Activated CD4-positive, alpha-beta T cell treated with anti-CD3 and anti-CD28 coated beads, Interleukin-2, amount 10 ng/mL, durations not matched to agents 24 days and 14 days (primary cell): ENCODE measurements at regions of chr4 and their contacts with region 1.

Region 1: DNA sequence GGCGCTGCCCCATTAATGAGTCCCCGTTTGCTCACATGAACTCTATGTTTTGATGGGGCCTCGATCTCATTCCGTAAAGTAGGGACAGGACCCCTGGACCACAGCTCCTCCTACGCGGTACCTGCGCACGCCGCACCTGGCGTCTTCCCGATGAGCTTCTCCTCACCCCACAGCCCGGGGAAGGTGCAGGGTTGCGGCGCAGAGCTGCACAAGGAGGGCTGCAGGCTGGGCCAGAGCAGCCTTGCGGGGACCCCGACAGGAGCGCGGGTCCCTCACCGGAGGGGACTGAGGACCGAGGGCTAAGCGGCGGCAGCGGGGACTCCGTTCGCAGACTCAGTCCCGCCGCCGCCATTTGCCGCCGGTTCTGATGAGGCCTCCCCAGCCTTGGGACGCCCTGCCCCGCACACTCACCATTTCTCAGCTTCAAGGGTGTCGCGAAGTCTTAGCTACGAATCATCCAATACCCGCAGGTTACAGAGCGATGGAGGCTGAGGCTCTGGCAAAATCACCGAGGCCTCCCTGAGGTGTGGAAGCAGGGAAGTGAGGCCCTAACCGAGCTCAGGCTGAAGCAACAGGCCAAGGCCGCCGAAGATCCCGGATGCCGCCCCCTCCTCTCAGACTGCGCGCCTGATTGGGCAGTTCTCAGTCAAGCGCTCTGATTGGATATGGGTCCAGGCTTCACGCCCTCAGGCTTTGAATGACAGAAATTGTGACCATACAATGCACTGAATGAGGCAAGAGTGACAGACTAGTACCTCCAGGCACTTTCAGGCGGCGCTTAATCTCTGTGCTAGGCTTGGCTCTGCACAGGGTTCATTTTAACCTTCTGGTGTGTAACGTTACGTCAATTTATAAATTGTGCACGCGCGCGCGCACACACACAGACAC is 25.1 kb downstream of the ZNF721 start:
- DNase-seq: peak; percentile 98
- H3K4me3 Mint-ChIP-seq: peak overlapping the region; percentile 99
- H3K27ac Mint-ChIP-seq: peak overlapping the region; percentile 100
- H3K4me1 Mint-ChIP-seq: peaks cover 22% of the 10 kb centered on the region
- H3K27me3 Mint-ChIP-seq: no peaks in the 10 kb centered on the region

Region 2: GRCh38 chr4:124275-125081 is 349.3 kb before region 1 on chr4 and contains the start of gene ZNF718:
- intact Hi-C with region 1: loop called (anchors 5 kb)
- DNase-seq: peak; percentile 97
- H3K4me3 Mint-ChIP-seq: peak within 1 kb of the TSS; percentile 100
- H3K27ac Mint-ChIP-seq: peak within 1 kb of the TSS; percentile 99
- H3K4me1 Mint-ChIP-seq: peaks cover 25% of the 10 kb centered on the region
- H3K27me3 Mint-ChIP-seq: no peaks in the 10 kb centered on the region
- total RNA-seq, gene ZNF718: 7.6 and 7.7 TPM in 2 replicates

Region 3: DNA sequence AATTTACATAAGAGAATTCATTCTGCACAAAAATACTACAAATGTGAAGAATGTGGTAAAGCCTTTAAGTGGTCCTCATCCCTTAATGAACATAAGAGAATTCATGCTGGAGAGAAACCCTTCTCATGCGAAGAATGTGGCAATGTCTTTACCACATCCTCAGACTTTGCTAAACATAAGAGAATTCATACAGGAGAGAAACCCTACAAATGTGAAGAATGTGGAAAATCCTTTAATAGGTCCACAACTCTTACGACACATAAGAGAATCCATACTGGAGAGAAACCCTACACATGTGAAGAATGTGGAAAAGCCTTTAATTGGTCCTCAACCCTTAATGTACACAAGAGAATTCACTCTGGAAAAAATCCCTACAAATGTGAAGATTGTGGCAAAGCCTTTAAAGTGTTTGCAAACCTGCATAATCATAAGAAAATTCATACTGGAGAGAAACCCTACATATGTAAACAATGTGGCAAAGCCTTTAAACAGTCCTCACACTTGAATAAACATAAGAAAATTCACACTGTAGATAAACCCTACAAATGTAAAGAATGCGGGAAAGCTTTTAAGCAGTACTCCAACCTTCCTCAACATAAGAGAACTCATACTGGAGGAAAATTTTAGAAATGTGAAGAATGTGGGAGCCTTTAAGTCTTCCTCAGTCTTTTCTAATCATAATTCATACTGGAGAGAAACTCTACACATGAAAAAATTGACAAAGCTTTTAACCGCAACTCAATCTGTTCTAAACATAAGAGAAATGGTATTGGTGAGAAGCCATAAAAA is 312.1 kb before region 1 on chr4:
- intact Hi-C with region 1: no loop called
- DNase-seq: no peak
- H3K4me3 Mint-ChIP-seq: no peak overlapping the region
- H3K27ac Mint-ChIP-seq: no peak overlapping the region
- H3K4me1 Mint-ChIP-seq: no peaks in the 10 kb centered on the region
- H3K27me3 Mint-ChIP-seq: no peaks in the 10 kb centered on the region

Region 4: DNA sequence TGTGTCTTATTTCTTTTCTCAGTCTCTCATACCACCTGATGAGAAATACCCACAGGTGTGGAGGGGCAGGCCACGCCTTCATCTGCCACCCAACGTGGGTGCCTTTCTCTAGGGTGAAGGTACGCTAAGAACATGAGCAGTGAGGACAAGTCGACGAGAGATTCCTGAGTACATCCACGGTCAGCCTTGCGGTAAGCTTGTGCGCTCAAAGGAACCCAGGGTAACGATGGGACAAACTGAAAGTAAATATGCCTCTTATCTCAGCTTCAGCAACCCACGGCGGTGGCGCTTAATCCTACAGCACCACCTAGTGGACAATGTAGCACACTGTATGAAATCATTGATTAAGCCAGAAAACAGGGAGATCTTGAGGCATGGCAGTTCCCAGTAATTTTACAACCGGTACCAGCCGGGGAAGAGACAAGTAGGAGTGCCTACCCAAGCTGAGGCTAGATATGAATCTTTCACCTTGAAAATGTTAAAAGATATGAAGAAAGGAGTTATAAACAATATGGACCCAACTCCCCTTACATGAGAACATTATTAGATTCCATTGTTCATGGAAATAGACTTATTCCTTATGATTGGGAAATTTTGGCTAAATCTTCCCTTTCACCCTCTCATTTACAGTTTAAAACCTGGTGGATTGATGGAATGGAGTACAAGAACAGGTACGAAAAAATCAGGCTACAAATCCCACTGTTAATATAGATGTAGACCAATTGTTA is 231.5 kb before region 1 on chr4:
- intact Hi-C with region 1: loop called (anchors 10 kb)
- DNase-seq: peak; percentile 91
- H3K4me3 Mint-ChIP-seq: peak overlapping the region; percentile 82
- H3K27ac Mint-ChIP-seq: peak overlapping the region; percentile 63
- H3K4me1 Mint-ChIP-seq: peaks cover 8% of the 10 kb centered on the region
- H3K27me3 Mint-ChIP-seq: no peaks in the 10 kb centered on the region

Region 5: DNA sequence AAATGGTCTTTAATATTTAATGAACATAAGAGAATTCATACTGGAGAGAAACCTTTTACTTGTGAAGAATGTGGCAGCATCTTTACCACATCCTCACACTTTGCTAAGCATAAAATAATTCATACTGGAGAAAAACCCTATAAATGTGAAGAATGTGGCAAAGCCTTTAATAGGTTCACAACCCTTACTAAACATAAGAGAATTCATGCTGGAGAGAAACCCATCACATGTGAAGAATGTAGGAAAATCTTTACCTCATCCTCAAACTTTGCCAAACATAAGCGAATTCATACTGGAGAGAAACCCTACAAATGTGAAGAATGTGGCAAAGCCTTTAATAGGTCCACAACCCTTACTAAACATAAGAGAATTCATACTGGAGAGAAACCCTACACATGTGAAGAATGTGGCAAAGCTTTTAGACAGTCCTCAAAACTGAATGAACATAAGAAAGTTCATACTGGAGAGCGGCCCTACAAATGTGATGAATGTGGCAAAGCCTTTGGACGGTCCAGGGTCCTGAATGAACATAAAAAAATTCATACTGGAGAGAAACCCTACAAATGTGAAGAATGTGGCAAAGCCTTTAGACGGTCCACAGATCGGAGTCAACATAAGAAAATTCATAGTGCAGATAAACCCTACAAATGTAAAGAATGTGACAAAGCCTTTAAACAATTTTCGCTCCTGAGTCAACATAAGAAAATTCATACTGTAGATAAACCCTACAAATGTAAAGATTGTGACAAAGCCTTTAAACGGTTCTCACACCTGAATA is 100.6 kb before region 1 on chr4:
- intact Hi-C with region 1: loop called (anchors 10 kb)
- DNase-seq: no peak
- H3K4me3 Mint-ChIP-seq: no peak overlapping the region
- H3K27ac Mint-ChIP-seq: no peak overlapping the region
- H3K4me1 Mint-ChIP-seq: no peaks in the 10 kb centered on the region
- H3K27me3 Mint-ChIP-seq: no peaks in the 10 kb centered on the region

Region 6: DNA sequence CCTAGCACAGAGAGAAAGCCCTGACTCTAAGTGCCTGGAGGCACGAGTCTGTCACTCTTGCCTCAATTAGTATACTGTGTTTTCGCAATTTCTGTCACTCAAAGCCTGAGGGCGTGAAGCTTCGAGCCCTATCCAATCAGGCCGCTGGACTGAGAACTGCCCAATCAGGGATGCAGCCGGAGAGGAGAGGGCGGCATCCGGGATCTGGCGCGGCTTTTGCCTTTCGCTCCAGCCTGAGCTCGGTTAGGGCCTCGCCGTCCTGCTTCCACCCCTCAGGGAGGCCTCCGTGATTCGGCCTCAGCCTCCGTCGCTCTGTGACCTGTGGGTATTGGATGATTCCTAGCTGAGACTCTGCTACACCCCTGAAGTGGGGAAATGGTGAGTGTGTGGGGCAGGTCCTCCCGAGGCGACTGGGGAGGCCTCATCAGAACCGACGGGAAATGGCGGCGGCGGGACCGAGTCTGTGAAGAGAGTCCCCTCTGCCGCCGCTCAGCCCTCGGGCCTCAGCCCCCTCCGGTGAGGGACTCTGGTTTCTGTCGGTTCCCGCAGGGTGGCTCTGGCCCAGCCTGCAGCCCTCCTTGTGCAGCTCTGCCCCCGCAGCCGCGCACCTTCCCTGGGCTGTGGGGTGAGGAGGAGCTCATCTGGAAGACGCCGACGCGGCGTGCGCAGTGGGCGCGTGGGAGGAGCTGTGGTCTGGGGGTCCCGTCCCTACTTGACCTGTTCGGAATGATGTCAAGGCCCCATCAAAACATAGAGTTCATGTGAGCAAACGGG is 87.7 kb before region 1 on chr4:
- intact Hi-C with region 1: no loop called
- DNase-seq: no peak
- H3K4me3 Mint-ChIP-seq: no peak overlapping the region
- H3K27ac Mint-ChIP-seq: no peak overlapping the region
- H3K4me1 Mint-ChIP-seq: peaks cover 8% of the 10 kb centered on the region
- H3K27me3 Mint-ChIP-seq: no peaks in the 10 kb centered on the region

Region 7: DNA sequence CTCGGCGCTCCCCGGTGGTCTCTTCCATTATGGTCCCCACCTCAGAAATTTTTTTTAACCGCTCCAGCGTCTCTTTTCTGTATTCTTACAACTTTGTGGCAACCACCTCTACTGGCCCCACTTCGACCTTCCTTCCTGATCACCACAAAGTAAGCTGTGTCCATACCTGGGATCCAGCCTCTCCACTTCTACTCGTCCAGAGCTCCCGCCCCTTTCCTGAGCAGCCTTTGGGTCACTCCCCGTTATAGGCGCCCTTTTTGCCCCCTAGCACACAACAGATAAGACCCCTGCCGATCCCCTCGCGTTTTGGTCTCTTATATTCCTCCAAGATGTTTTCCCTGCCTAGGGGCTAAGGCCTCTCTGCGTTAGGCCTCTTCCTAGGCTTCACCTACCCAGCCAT is 25.8 kb after region 1 on chr4:
- intact Hi-C with region 1: loop called (anchors 1 kb)
- DNase-seq: peak; percentile 69
- H3K4me3 Mint-ChIP-seq: peak overlapping the region; percentile 93
- H3K27ac Mint-ChIP-seq: peak overlapping the region; percentile 96
- H3K4me1 Mint-ChIP-seq: peaks cover 25% of the 10 kb centered on the region
- H3K27me3 Mint-ChIP-seq: no peaks in the 10 kb centered on the region